ENCODE measurements at regions of chr22 and their contacts with region 1.

Region 1: DNA sequence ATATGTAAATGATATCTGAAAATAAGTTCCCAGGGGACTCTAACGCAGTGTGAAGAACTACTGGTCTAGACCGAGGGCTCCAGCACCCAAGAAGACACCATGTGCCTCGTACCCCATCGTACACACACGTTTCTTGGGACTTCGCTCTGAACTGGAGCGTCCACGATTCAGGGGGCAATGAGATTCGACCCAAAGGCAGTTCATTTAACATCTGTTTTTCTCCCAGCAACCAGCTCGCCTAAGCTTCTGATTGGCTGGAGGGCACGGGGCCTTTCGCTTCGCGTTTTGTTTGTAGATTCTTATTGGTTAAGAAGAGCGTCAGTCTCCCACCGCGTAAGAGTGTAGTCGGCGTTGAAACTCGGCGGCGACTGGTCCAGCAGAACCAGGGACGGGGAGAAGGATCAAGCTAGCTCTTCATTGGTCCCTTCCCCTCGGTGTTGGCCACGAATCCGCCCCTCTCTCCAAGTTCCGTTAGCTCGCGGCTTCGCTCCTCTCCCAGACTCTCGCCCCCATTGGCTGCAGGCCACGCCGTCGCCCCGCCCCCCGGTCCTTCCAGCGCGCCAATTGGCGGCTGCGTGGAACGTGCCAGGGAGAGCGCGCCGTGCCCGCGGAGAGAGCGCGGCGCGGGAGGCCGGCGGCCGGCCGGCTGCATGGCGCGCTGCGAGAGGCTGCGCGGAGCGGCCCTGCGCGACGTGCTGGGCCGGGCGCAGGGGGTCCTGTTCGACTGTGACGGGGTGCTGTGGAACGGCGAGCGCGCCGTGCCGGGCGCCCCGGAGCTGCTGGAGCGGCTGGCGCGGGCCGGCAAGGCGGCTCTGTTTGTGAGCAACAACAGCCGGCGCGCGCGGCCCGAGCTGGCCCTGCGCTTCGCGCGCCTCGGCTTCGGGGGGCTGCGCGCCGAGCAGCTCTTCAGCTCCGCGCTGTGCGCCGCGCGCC is at the start of gene PDXP:
- H3K4me3 ChIP-seq: peak within 1 kb of the TSS; percentile 85
- H3K27ac ChIP-seq: peak within 1 kb of the TSS; percentile 90
- H3K4me1 ChIP-seq: peaks cover 12% of the 10 kb centered on the region
- CTCF ChIP-seq: no peak

Region 2: DNA sequence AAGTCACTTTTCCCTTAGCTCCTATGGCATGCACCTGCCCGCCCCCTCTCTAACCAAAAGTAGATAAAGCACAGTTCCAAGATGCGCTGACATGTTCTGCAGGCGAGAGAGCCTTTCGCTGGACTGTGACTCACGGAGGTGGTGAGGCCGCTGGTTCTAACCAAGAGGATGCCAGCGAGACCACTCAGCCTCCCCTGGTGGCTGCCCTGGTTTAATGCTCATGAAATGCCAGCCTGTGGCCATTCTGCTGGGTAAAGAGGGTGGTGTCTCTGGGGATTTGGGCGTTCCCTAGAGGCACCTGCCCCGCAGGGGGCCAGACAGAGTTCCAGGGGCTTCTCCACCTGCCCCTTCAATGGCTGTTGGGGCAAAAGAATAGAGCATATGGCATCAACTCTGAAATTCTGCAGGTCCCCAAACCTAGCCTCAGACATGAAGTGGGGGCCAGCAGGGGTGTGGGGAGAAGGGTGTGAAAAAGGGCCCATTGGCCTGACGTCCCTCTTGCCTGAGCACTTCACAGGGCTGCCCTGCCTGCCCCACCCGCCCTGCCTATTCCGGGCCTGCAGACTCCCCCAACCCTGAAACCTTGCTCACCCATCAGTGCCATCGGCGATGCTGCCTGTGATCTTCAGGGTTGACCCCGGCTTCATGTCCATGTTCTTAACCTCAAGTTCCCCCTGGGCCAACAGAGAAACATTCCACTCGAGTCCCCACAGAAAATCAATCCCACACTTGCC is 87.0 kb before region 1 on chr22:
- CTCF ChIA-PET with region 1: no interaction called
- POLR2A ChIA-PET with region 1: no interaction called
- H3K4me3 ChIP-seq: no peak overlapping the region
- H3K27ac ChIP-seq: no peak overlapping the region
- H3K4me1 ChIP-seq: peaks cover 5% of the 10 kb centered on the region; the same call in 1 of the 2 replicates
- CTCF ChIP-seq: peak; percentile 51; the same call in 1 of the 2 replicates

Region 3: DNA sequence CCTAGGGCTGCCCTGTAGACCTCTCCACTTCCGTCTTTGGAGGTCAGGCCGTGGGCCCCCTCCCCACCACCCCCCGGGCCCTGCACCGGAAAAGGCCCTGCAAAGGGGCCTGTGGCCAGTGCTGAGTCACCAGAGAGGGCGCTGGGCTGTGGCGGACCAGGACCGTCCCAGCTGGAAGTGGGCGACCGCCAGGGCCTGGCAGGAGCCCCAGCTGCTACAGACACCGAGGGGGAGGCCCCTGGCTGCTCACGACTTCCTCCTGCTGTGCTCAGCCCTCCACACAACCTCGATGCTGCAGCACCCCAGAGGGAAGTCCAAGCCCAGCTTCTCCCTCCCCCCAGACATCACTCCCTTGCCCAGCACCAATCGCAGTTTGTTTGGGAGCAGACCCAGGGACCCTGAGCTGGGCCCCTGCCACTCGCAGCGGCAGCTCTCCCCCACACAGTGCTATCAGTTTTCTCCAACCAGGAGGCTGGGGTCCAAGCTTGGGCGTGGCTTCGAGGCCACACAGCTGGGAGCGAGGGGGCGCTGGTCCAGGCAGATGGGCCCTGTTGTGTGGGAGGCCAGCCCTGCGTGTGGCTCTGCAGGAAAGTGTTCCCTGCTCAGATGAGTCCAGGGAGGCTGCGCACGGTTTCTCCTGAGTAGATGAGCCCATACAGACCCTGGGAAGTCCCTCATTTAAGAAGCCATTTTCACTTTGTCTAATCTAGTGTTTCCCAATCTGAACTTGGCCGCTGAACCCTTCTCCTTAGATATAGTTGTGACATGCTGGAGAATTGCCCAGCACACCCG is 24.6 kb before region 1 on chr22:
- CTCF ChIA-PET with region 1: interaction called, 4 read pairs
- POLR2A ChIA-PET with region 1: interaction called, 80 read pairs
- H3K4me3 ChIP-seq: no peak overlapping the region
- H3K27ac ChIP-seq: peak overlapping the region; percentile 7; the same call in 1 of the 2 replicates
- H3K4me1 ChIP-seq: peaks cover 13% of the 10 kb centered on the region
- CTCF ChIP-seq: peak; percentile 61

Region 4: GRCh38 chr22:37676736-37677492 is 18.5 kb after region 1 on chr22:
- CTCF ChIA-PET with region 1: interaction called, 87 read pairs
- POLR2A ChIA-PET with region 1: interaction called, 78 read pairs
- H3K4me3 ChIP-seq: peak overlapping the region; percentile 39
- H3K27ac ChIP-seq: peak overlapping the region; percentile 62
- H3K4me1 ChIP-seq: peaks cover 9% of the 10 kb centered on the region
- CTCF ChIP-seq: no peak

Region 5: DNA sequence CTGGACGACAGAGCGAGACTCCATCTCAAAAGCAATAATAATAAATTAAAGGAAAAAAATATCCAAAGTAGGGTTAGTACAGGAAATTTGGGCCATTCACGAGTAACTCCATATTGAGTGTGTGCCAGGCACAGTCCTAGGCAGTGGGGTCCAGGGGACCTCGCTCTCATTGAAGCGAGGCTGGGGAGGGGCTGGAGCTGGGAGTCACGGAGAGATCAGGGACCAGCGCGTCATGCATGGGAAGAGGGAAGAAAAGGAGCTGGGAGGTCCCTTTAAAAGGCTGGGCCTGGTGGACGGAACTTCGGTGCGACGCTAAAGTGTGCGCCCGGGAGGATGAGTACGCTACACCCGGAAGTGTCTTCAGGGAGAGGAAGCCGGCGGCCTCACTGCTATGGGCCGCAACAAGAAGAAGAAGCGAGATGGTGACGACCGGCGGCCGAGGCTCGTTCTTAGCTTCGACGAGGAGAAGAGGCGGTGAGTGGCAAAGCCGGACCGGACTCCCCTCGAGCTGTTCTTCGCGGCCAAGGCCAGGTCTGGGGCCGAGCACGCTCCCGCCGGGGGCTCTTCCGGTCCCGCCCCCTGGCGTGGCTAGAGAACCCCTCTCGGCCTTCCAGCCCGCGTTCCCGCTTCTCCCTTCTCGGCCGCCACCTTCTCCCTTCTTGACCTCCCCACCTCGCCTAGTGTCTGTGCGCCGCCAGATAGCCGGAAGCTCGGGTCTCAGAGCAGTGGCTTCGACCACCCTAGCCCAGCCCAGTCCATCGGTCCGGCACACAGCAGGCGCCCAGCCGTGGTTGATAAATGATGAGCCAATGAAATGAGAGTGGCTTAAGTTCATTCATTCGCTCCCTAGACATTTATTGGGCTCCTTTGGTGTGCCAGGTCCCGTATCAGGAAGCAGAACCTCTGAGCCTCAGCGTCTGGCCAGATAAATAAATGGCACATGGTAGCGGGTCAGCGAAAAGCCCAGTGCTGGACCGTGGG is 27.9 kb after region 1 on chr22 and contains the start of gene NOL12:
- CTCF ChIA-PET with region 1: interaction called, 87 read pairs
- POLR2A ChIA-PET with region 1: interaction called, 23 read pairs
- H3K4me3 ChIP-seq: peak within 1 kb of the TSS; percentile 77
- H3K27ac ChIP-seq: peak within 1 kb of the TSS; percentile 81
- H3K4me1 ChIP-seq: peaks cover 2% of the 10 kb centered on the region; the same call in 1 of the 2 replicates
- CTCF ChIP-seq: peak; percentile 12; the same call in 1 of the 2 replicates

Region 6: GRCh38 chr22:37862570-37863325 is 204.3 kb after region 1 on chr22:
- CTCF ChIA-PET with region 1: no interaction called
- POLR2A ChIA-PET with region 1: no interaction called
- H3K4me3 ChIP-seq: no peak overlapping the region
- H3K27ac ChIP-seq: peak overlapping the region; percentile 39
- H3K4me1 ChIP-seq: peaks cover 4% of the 10 kb centered on the region; the same call in 1 of the 2 replicates
- CTCF ChIP-seq: no peak

Measured in HEK293 (cell line).